MCF 10A (cell line): ENCODE measurements at regions of chr1 and their contacts with region 1.

Region 1: GRCh38 chr1:235697508-235697907 is 47.9 kb upstream of the GNG4 start:
- DNase-seq: no peak
- H3K4me3 Mint-ChIP-seq: no peak overlapping the region
- H3K27ac Mint-ChIP-seq: no peak overlapping the region
- H3K4me1 Mint-ChIP-seq: no peaks in the 10 kb centered on the region
- H3K27me3 Mint-ChIP-seq: no peaks in the 10 kb centered on the region
- CTCF ChIP-seq: no peak

Region 2: GRCh38 chr1:235553112-235553551 is 144.4 kb before region 1 on chr1:
- CTCF ChIA-PET with region 1: no interaction called
- POLR2A ChIA-PET with region 1: no interaction called
- intact Hi-C with region 1: no loop called
- DNase-seq: no peak
- H3K4me3 Mint-ChIP-seq: no peak overlapping the region
- H3K27ac Mint-ChIP-seq: no peak overlapping the region
- H3K4me1 Mint-ChIP-seq: no peaks in the 10 kb centered on the region
- H3K27me3 Mint-ChIP-seq: no peaks in the 10 kb centered on the region
- CTCF ChIP-seq: no peak

Region 3: DNA sequence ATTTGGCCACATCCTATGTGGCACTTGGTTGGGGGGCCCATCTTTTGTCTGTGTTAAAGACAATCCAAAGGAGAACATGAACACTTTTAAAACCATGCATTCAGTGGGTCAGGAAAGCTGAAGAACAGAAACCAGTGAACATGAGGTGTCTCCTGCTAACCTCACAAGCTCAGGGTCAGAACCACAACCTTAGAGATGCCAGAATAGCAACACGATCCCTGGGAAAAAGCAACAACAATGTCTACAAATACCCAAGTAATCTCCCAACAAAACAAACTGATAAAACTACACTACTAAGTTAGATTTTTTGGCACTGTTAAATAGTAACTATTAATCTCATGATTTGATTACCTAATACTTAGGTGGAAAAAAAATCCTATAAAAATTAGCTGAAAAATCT is 13.9 kb before region 1 on chr1:
- CTCF ChIA-PET with region 1: interaction called, 4 read pairs
- POLR2A ChIA-PET with region 1: interaction called, 10 read pairs
- intact Hi-C with region 1: no loop called
- DNase-seq: no peak
- H3K4me3 Mint-ChIP-seq: no peak overlapping the region
- H3K27ac Mint-ChIP-seq: no peak overlapping the region
- H3K4me1 Mint-ChIP-seq: no peaks in the 10 kb centered on the region
- H3K27me3 Mint-ChIP-seq: no peaks in the 10 kb centered on the region
- CTCF ChIP-seq: no peak

Region 4: DNA sequence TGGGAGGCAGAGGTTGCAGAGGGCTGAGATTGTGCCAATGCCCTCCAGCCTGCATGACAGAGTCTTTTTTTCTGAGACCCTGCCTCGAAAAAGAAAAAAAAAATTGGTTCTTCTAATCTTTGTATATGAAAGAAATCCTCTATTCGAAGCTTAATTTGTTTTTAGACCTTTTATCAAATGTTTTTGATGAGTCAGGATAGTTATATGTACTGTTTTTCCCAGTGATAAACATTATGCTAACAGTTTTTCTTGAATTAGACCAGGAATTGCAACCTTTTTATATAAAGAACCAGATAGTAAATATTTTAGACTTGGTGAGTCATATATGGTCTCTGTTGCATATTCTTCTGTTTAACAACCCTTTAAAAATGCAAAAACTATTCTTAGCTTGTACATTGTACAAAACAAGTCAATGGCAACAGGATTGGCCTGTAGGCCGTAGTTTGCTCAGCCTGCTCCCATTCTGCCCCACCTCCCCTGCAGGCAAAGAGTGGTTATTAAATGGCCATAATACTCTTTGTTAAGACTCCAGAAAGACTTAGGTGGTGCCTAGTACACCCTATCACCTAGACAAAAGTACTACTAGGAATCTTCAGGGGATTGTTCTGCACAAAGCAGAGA is 124.0 kb after region 1 on chr1:
- CTCF ChIA-PET with region 1: no interaction called
- POLR2A ChIA-PET with region 1: no interaction called
- intact Hi-C with region 1: no loop called
- DNase-seq: no peak
- H3K4me3 Mint-ChIP-seq: no peak overlapping the region
- H3K27ac Mint-ChIP-seq: no peak overlapping the region
- H3K4me1 Mint-ChIP-seq: peaks cover 10% of the 10 kb centered on the region
- H3K27me3 Mint-ChIP-seq: no peaks in the 10 kb centered on the region
- CTCF ChIP-seq: no peak